GM12878 (cell line): ENCODE measurements at regions of chr16 and their contacts with region 1.

Region 1: GRCh38 chr16:27408012-27408601 is 6.1 kb downstream of the IL21R start:
- DNase-seq: peak; percentile 76
- ATAC-seq: peak; percentile 51
- H3K4me3 ChIP-seq: peak overlapping the region; percentile 86
- H3K27ac ChIP-seq: peak overlapping the region; percentile 97
- H3K4me1 ChIP-seq: peaks cover 28% of the 10 kb centered on the region
- H3K27me3 ChIP-seq: no peaks in the 10 kb centered on the region
- CTCF ChIP-seq: no peak
- EP300 ChIP-seq: peak in 1 of 2 experiments; percentile 11; a peak in 1 of 4 replicates
- POLR2A ChIP-seq: peak; percentile 53; the same call in 1 of the 2 replicates
- RAD21 ChIP-seq: no peak

Region 2: DNA sequence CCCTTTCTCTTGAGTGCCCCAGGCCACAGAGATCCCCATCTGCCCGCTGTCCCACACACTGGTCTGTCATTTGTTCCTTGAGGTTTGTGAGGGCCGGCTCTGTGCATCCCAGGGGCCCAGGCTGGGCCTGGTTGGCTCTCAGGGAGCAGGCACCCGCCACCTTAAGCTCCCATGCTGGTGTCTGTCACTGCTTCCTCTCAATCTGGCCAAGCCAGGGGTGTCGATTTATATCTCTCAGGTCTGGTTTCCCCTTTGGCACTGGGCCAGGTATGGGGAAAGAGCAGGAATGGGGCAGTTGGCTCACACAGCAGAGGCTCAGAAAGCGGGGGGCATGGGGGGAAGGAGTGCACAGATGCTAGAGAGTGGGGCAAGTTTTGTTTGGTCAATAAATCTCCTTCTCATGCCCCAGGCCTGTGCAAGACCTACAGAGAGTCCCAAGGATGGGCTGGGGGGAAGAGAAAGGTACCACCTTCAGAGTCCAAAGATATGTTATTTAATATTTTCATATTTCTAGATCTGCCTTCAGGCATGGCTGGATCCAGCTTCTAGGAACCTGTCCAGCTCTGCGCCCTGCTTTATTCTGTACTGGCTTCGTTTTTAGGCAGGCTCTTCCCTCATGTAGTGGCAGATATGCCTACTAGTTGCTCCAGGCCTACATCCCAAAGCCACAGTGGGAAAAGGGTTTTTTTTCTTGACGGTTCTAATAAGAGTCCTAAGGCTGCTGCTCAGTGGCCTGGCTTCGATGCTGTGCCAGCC is 60.0 kb before region 1 on chr16:
- CTCF ChIA-PET with region 1: no interaction called
- POLR2A ChIA-PET with region 1: no interaction called
- RAD21 ChIA-PET with region 1: no interaction called
- SMC1A ChIA-PET with region 1: no interaction called
- in situ Hi-C with region 1: no loop called
- intact Hi-C with region 1: no loop called
- DNase-seq: no peak
- ATAC-seq: no peak
- H3K4me3 ChIP-seq: no peak overlapping the region
- H3K27ac ChIP-seq: no peak overlapping the region
- H3K4me1 ChIP-seq: no peaks in the 10 kb centered on the region
- H3K27me3 ChIP-seq: no peaks in the 10 kb centered on the region
- CTCF ChIP-seq: no peak
- EP300 ChIP-seq: no peak
- POLR2A ChIP-seq: no peak
- RAD21 ChIP-seq: no peak

Region 3: DNA sequence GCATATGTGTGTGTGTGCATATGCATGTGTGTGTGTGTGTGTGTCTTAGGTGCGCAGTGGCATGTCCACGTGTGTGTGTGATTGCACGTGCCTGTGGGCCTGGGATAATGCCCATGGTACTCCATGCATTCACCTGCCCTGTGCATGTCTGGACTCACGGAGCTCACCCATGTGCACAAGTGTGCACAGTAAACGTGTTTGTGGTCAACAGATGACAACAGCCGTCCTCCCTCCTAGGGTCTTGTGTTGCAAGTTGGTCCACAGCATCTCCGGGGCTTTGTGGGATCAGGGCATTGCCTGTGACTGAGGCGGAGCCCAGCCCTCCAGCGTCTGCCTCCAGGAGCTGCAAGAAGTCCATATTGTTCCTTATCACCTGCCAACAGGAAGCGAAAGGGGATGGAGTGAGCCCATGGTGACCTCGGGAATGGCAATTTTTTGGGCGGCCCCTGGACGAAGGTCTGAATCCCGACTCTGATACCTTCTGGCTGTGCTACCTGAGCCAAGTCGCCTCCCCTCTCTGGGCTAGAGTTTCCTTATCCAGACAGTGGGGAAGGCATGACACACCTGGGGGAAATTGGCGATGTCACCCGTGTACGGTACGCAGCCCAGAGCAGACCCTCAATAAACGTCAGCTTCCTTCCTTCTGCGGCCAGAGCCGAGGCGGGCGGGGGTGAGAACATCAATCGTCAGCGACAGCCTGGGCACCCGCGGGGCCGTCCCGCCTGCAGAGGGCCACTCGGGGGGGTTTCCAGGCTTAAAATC is 41.5 kb after region 1 on chr16:
- CTCF ChIA-PET with region 1: interaction called, 25 read pairs
- POLR2A ChIA-PET with region 1: interaction called, 132 read pairs
- RAD21 ChIA-PET with region 1: interaction called, 145 read pairs
- SMC1A ChIA-PET with region 1: interaction called, 82 read pairs
- in situ Hi-C with region 1: no loop called
- intact Hi-C with region 1: loop called (anchors 2 kb)
- DNase-seq: no peak
- ATAC-seq: peak; percentile 79
- H3K4me3 ChIP-seq: no peak overlapping the region
- H3K27ac ChIP-seq: peak overlapping the region; percentile 66
- H3K4me1 ChIP-seq: peaks cover 57% of the 10 kb centered on the region
- H3K27me3 ChIP-seq: no peaks in the 10 kb centered on the region
- CTCF ChIP-seq: no peak
- EP300 ChIP-seq: peak; percentile 81; a peak in 3 of 4 replicates
- POLR2A ChIP-seq: peak; percentile 76
- RAD21 ChIP-seq: 0 out of 2 replicates have a peak, but pooled peaks have one; percentile 1